ENCODE measurements at regions of chr14 and their contacts with region 1.

Region 1: DNA sequence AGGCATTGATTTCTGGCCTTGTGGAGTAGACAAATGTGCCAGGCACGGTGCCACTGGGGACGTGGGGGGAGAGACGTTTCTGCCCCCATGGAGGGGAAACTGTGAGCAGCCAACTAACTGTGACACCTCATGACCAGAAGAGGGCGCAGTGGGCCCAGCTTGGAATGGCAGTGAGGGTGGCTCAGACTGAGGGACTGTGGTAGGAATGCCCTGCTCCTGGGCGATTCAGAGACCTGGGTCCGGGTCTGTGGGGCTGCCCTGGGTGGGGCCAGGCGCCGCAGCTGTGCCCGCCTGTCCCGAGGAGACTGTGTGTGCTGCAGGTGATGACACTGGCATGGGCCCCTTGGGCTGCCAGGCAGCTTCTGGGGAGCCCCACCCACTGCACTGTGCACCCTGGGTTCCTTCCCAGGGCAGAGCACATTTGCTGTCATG is 60.6 kb downstream of the SLC25A47 start:
- DNase-seq: no peak
- H3K4me3 ChIP-seq: no peak overlapping the region
- H3K27ac ChIP-seq: no peak overlapping the region
- H3K27me3 ChIP-seq: no peaks in the 10 kb centered on the region
- CTCF ChIP-seq: peak; percentile 84

Region 2: GRCh38 chr14:100332797-100333196 is 50.9 kb before region 1 on chr14:
- CTCF ChIA-PET with region 1: no interaction called
- POLR2A ChIA-PET with region 1: no interaction called
- DNase-seq: no peak
- H3K4me3 ChIP-seq: no peak overlapping the region
- H3K27ac ChIP-seq: no peak overlapping the region
- H3K27me3 ChIP-seq: peaks cover 2% of the 10 kb centered on the region
- CTCF ChIP-seq: no peak

Region 3: GRCh38 chr14:100417466-100417865 is 33.7 kb after region 1 on chr14:
- CTCF ChIA-PET with region 1: interaction called, 19 read pairs
- POLR2A ChIA-PET with region 1: no interaction called
- DNase-seq: peak; percentile 87
- H3K4me3 ChIP-seq: no peak overlapping the region
- H3K27ac ChIP-seq: peak overlapping the region; percentile 65
- H3K27me3 ChIP-seq: no peaks in the 10 kb centered on the region
- CTCF ChIP-seq: peak; percentile 95

Region 4: GRCh38 chr14:100454437-100454836 is 70.7 kb after region 1 on chr14:
- CTCF ChIA-PET with region 1: no interaction called
- POLR2A ChIA-PET with region 1: no interaction called
- DNase-seq: no peak
- H3K4me3 ChIP-seq: no peak overlapping the region
- H3K27ac ChIP-seq: no peak overlapping the region
- H3K27me3 ChIP-seq: no peaks in the 10 kb centered on the region
- CTCF ChIP-seq: no peak

Region 5: DNA sequence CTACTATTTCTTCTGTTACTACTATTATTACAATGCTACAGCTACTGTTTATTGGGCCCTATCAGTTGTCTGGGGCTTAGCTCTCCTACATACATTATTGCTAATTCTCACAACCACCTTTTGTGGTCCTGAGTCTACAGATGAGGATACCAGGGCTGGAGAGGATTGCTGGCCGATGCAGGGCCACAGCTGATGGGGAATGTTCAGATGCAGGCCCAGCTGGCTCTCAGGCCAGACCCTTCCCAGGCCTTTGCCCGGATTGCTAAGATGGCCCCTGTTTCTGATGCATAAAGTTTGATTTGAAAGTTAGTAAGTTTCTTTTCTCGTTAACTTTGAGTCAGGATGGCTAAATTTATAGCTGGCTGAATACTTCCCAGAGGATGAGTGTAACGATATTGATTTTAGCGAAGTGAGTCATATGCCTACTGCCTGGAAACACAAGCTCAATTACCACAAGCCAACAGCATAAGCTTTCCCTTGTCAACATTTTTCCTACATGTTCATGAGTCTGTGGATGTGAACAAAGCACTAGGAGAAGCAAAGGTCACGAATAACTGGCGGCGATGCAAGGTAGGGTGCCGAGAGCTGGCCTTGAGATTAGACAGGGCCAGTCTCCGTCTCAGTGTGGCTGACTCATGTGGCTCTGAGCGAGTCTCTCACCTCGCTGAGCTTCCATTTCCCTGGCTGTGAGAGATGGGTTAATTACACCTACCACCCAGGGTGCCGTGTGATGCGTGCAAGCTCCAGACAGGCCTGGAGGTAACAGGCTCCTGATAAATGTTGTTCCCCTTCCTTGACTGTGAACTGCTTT is 92.5 kb after region 1 on chr14:
- CTCF ChIA-PET with region 1: interaction called, 14 read pairs
- POLR2A ChIA-PET with region 1: no interaction called
- DNase-seq: peak; percentile 76
- H3K4me3 ChIP-seq: peak overlapping the region; percentile 15; the same call in 1 of the 2 replicates
- H3K27ac ChIP-seq: peak overlapping the region; percentile 74
- H3K27me3 ChIP-seq: no peaks in the 10 kb centered on the region
- CTCF ChIP-seq: no peak

Region 6: DNA sequence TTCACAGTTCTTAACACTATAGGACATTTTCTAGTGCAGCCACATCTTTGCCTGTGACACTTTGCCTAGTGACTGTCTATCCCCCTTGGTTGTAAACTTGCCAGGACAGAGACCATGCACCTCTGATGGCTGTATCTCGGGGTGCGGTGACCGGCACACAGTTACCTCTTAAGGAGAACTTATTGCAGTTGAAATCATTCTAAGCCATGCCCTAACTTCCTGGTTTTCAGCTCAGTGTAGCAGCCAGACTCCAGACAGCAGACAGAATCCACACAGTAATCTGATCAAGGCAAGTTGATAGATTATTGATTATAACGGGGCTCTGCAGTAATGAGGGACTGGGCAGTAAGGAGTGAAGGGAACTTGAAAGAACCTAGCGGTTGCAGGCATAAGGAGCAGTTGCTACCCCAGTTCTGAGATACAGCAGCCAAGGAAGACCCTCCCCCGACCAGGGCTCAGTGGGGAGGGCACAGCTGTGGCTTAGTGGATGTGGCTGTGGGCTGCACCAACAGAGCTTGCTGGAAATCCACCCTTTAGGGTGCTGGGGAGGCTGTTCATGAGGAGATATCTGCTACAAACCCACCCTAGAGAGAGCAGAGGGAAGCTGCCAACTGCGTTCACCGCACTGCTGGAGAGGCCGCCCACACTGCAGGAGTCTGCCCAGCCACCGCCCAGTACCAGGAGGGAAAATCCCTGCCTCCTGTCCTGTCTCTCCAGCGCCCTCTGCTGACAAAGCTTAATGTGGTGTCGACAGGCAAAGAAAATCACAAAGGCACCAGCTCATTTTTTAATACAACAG is 261.6 kb after region 1 on chr14:
- CTCF ChIA-PET with region 1: interaction called, 150 read pairs
- POLR2A ChIA-PET with region 1: interaction called, 3 read pairs
- DNase-seq: peak; percentile 55
- H3K4me3 ChIP-seq: no peak overlapping the region
- H3K27ac ChIP-seq: no peak overlapping the region
- H3K27me3 ChIP-seq: peaks cover 22% of the 10 kb centered on the region
- CTCF ChIP-seq: peak; percentile 81

Region 7: GRCh38 chr14:100662879-100663760 is 279.4 kb after region 1 on chr14:
- CTCF ChIA-PET with region 1: interaction called, 15 read pairs
- POLR2A ChIA-PET with region 1: interaction called, 5 read pairs
- DNase-seq: no peak
- H3K4me3 ChIP-seq: no peak overlapping the region
- H3K27ac ChIP-seq: no peak overlapping the region
- H3K27me3 ChIP-seq: peaks cover 19% of the 10 kb centered on the region
- CTCF ChIP-seq: peak; percentile 85